Endothelial cell of umbilical vein (primary cell): ENCODE measurements at regions of chr10 and their contacts with region 1.

Region 1: DNA sequence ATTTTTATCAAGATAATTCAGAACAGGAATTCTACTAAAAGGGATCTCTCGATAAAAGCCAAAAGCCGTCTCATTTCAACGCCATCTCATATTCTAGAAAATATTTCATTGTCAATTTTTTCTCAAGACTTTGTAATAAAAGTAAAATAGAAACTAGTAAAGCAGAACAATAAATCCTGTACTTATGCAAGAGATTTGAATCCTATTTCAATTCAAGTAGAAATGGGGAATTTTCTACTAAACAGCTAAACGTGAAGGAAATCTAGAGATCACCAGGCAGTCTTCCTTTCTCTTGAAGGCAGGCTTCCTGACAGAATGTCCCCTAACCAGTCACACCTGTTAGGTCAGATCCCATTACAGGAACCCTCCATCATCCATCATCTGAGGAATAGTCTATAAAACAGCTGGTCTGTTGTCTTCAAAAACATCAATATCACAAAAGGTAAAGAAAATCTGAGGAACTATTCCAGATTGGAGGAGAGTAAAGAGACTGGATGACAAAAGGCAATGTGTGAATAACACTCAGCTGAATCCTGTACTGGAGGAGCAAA is 23.7 kb downstream of the USP6NL start:
- DNase-seq: no peak
- H3K4me3 ChIP-seq: no peak overlapping the region
- H3K27ac ChIP-seq: no peak overlapping the region
- H3K4me1 ChIP-seq: peaks cover 12% of the 10 kb centered on the region
- H3K27me3 ChIP-seq: no peaks in the 10 kb centered on the region
- CTCF ChIP-seq: no peak
- POLR2A ChIP-seq: no peak

Region 2: DNA sequence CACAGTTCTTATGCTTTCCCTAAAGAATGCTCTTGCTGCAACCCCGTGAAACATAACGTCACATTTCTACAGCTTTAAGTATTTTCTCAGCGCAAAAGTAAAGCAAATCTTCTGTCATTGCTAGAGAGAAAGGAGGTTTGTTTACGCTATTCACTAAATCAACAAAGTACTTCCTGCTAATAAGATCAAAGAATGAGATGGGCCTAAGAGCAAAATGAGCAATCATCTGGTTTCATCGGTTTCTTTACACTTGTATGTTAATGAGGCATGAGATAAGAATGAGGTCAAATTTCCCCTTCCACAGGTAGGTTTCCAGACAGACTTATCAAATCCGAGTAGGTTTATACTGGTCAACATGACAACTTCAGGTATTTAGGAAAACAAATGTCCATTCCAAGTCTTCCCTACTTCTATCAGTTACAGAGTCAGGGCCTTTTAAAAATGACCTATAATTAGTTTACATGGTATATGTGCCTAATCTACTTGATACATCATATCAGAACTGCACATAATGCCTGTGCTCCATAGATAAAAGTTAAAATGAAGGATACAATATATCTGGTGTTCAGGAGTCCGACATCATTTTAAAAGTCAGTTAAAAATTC is 15.2 kb after region 1 on chr10:
- CTCF ChIA-PET with region 1: interaction called, 3 read pairs
- POLR2A ChIA-PET with region 1: no interaction called
- dilution Hi-C with region 1: no loop called
- intact Hi-C with region 1: loop called (anchors 2 kb)
- DNase-seq: peak; percentile 51
- H3K4me3 ChIP-seq: no peak overlapping the region
- H3K27ac ChIP-seq: no peak overlapping the region
- H3K4me1 ChIP-seq: peaks cover 12% of the 10 kb centered on the region
- H3K27me3 ChIP-seq: no peaks in the 10 kb centered on the region
- CTCF ChIP-seq: no peak
- POLR2A ChIP-seq: no peak